Thyroid gland (tissue), 4 donors: ENCODE measurements at regions of chr12 and their contacts with region 1.

Region 1: GRCh38 chr12:124872068-124872719 is 8.5 kb upstream of the SCARB1 start:
- DNase-seq: no peak
- H3K4me3 ChIP-seq: no peak overlapping the region
- H3K27ac ChIP-seq: no peak overlapping the region
- H3K4me1 ChIP-seq: no peaks in the 10 kb centered on the region
- H3K27me3 ChIP-seq: no peaks in the 10 kb centered on the region
- CTCF ChIP-seq: no peak
- POLR2A ChIP-seq: no peak

Region 2: GRCh38 chr12:124804011-124804621 is 68.1 kb before region 1 on chr12:
- intact Hi-C with region 1: loop called (anchors 10 kb)
- DNase-seq: peak; percentile 80 to 85
- H3K4me3 ChIP-seq: no peak overlapping the region
- H3K27ac ChIP-seq: peak overlapping the region in 2 of 3 donors; percentile 3 to 47
- H3K4me1 ChIP-seq: peaks cover 9 to 10% of the 10 kb centered on the region in 2 donors
- H3K27me3 ChIP-seq: no peaks in the 10 kb centered on the region
- CTCF ChIP-seq: no peak
- POLR2A ChIP-seq: peak in 1 of 2 donors; percentile 9